CD8-positive, alpha-beta T cell (primary cell): ENCODE measurements at regions of chr9 and their contacts with region 1.

Region 1: DNA sequence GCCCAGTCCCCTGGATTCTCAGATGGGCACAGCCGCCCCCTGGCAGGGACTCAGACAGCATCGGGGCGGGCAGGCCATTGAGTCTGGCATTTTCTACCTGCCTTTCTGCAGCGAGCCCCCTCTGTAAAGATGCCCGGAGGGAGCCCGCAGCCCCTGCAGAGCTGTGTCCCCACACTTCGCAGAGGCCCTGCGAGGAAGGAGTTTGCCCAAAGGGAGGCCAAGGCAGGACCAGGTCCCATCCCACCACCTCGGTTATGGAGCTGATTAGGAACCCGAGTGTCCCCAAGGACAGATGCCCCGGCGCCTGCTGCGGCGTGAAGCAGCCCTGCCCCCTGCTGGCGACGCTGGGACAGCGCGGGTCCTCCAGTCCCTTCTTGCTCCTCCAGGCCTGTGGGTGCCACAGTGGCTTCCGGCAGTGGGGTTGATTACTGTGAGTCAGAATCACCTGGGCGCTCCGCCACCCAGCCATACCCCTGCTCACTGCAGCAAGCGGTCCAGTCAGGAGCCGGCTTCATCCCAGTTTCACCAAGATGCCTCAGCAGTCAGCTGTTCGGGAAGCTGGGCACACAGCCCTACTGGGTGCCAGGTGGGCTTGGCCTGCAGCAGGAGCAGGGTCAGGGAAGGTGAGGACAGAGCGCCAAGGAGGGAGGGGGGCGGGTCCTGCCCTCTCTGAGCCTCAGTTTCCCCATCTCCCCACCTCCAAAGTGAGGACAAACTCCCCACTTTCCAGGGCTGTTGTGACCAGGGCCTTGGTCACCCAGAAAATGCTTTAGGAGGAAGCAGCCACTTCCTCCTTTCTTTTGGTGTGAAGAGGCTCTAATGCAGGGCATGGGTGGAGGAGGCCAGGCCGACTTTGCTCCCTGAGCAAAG is 117.1 kb downstream of the RXRA start:
- DNase-seq: peak; percentile 70 to 94 (median 88)
- ATAC-seq: peak; percentile 99
- H3K4me3 ChIP-seq: no peak overlapping the region
- H3K4me3 Mint-ChIP-seq: no peak overlapping the region
- H3K27ac ChIP-seq: peak overlapping the region in 1 of 2 experiments; percentile 28
- H3K27ac Mint-ChIP-seq: peak overlapping the region; percentile 67
- H3K4me1 ChIP-seq: peaks cover 12% of the 10 kb centered on the region
- H3K4me1 Mint-ChIP-seq: peaks cover 12% of the 10 kb centered on the region
- H3K27me3 ChIP-seq: peaks cover 5 to 8% of the 10 kb centered on the region in 2 experiments
- H3K27me3 Mint-ChIP-seq: peaks cover 4% of the 10 kb centered on the region
- CTCF ChIP-seq: peak; percentile 91

Region 2: GRCh38 chr9:134171316-134172197 is 271.8 kb before region 1 on chr9:
- CTCF ChIA-PET with region 1: interaction called, 71 read pairs
- POLR2A ChIA-PET with region 1: interaction called, 5 read pairs
- intact Hi-C with region 1: loop called (anchors 1 kb)
- DNase-seq: peak in 1 of 9 experiments; percentile 16
- ATAC-seq: no peak
- H3K4me3 ChIP-seq: no peak overlapping the region
- H3K4me3 Mint-ChIP-seq: no peak overlapping the region
- H3K27ac ChIP-seq: no peak overlapping the region
- H3K27ac Mint-ChIP-seq: no peak overlapping the region
- H3K4me1 ChIP-seq: no peaks in the 10 kb centered on the region
- H3K4me1 Mint-ChIP-seq: no peaks in the 10 kb centered on the region
- H3K27me3 ChIP-seq: no peaks in the 10 kb centered on the region
- H3K27me3 Mint-ChIP-seq: no peaks in the 10 kb centered on the region
- CTCF ChIP-seq: no peak

Region 3: GRCh38 chr9:134325817-134326723 is 117.3 kb before region 1 on chr9 and contains the start of gene RXRA:
- CTCF ChIA-PET with region 1: interaction called, 7 read pairs
- POLR2A ChIA-PET with region 1: no interaction called
- intact Hi-C with region 1: loop called in 1 of 2 experiments (anchors 2 kb)
- DNase-seq: peak; percentile 37 to 87 (median 74)
- ATAC-seq: peak; percentile 69
- H3K4me3 ChIP-seq: peak within 1 kb of the TSS; percentile 68 to 93
- H3K4me3 Mint-ChIP-seq: peak within 1 kb of the TSS; percentile 75
- H3K27ac ChIP-seq: peak within 1 kb of the TSS in 1 of 2 experiments; percentile 33
- H3K27ac Mint-ChIP-seq: no peak within 1 kb of the TSS
- H3K4me1 ChIP-seq: peaks cover 16% of the 10 kb centered on the region
- H3K4me1 Mint-ChIP-seq: peaks cover 2% of the 10 kb centered on the region
- H3K27me3 ChIP-seq: no peaks in the 10 kb centered on the region
- H3K27me3 Mint-ChIP-seq: no peaks in the 10 kb centered on the region
- CTCF ChIP-seq: no peak
- total RNA-seq, gene RXRA: 11.6 to 13.7 TPM

Region 4: DNA sequence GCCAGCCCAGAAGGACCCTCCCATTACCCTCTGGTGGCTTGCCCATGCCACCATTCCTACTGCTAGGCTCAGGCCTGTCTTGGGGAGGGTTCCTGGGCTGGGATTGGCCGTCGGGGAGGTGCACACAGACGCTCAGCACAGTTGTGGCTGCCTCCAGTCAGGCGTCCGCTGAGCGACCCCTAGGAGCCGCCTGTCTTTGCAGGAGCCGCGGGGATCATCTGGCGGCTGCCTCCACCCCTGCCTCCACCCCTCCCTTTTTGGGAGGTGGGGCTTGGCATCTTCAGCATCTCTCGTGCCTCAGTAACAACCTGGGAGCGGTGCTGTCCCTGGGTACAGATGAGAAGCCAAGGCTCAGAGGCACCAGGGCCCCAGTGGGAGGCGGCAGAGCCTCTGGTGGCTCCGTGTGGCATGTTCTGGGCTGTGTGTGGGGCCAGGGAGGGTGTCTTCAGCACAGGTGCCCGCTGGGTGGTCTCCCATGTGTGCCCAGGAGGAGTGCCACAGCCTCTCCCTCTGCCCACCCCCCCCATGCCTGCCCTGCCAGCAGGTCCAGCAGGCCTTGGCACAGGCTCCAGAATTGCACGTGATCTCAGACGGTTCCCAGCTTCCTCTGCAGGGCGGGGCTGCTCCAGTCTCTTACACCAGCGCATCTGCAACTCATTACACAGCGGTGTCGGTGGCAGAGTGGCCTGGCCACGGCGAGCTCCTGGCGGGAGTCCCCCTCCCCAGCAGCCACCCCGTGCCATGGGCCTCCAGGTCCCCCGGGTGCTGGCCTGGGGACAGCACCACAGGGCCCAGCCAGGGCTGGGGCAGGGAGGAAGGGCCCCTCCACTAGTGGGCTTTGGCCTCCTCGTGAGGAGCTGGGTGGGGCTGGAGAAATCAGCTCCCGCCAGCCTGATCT is 77.4 kb before region 1 on chr9:
- CTCF ChIA-PET with region 1: interaction called, 20 read pairs
- POLR2A ChIA-PET with region 1: no interaction called
- intact Hi-C with region 1: loop called in 1 of 2 experiments (anchors 2 kb)
- DNase-seq: peak in 1 of 9 experiments; percentile 34
- ATAC-seq: no peak
- H3K4me3 ChIP-seq: no peak overlapping the region
- H3K4me3 Mint-ChIP-seq: no peak overlapping the region
- H3K27ac ChIP-seq: no peak overlapping the region
- H3K27ac Mint-ChIP-seq: no peak overlapping the region
- H3K4me1 ChIP-seq: no peaks in the 10 kb centered on the region
- H3K4me1 Mint-ChIP-seq: peaks cover 2% of the 10 kb centered on the region
- H3K27me3 ChIP-seq: no peaks in the 10 kb centered on the region
- H3K27me3 Mint-ChIP-seq: no peaks in the 10 kb centered on the region
- CTCF ChIP-seq: no peak

Region 5: GRCh38 chr9:134381671-134382516 is 61.5 kb before region 1 on chr9:
- CTCF ChIA-PET with region 1: interaction called, 12 read pairs
- POLR2A ChIA-PET with region 1: no interaction called
- intact Hi-C with region 1: loop called in 1 of 2 experiments (anchors 1 kb)
- DNase-seq: peak in 8 of 9 experiments; percentile 40 to 86 (median 64)
- ATAC-seq: peak; percentile 80
- H3K4me3 ChIP-seq: peak overlapping the region; percentile 18 to 28
- H3K4me3 Mint-ChIP-seq: peak overlapping the region; percentile 53
- H3K27ac ChIP-seq: peak overlapping the region in 1 of 2 experiments; percentile 19
- H3K27ac Mint-ChIP-seq: peak overlapping the region; percentile 77
- H3K4me1 ChIP-seq: peaks cover 29% of the 10 kb centered on the region
- H3K4me1 Mint-ChIP-seq: peaks cover 22% of the 10 kb centered on the region
- H3K27me3 ChIP-seq: no peaks in the 10 kb centered on the region
- H3K27me3 Mint-ChIP-seq: no peaks in the 10 kb centered on the region
- CTCF ChIP-seq: peak; percentile 48

Region 6: GRCh38 chr9:134492281-134492691 is 48.9 kb after region 1 on chr9:
- CTCF ChIA-PET with region 1: no interaction called
- POLR2A ChIA-PET with region 1: no interaction called
- intact Hi-C with region 1: no loop called
- DNase-seq: no peak
- ATAC-seq: no peak
- H3K4me3 ChIP-seq: no peak overlapping the region
- H3K4me3 Mint-ChIP-seq: no peak overlapping the region
- H3K27ac ChIP-seq: no peak overlapping the region
- H3K27ac Mint-ChIP-seq: no peak overlapping the region
- H3K4me1 ChIP-seq: no peaks in the 10 kb centered on the region
- H3K4me1 Mint-ChIP-seq: no peaks in the 10 kb centered on the region
- H3K27me3 ChIP-seq: no peaks in the 10 kb centered on the region
- H3K27me3 Mint-ChIP-seq: peaks cover 4% of the 10 kb centered on the region
- CTCF ChIP-seq: no peak

Region 7: DNA sequence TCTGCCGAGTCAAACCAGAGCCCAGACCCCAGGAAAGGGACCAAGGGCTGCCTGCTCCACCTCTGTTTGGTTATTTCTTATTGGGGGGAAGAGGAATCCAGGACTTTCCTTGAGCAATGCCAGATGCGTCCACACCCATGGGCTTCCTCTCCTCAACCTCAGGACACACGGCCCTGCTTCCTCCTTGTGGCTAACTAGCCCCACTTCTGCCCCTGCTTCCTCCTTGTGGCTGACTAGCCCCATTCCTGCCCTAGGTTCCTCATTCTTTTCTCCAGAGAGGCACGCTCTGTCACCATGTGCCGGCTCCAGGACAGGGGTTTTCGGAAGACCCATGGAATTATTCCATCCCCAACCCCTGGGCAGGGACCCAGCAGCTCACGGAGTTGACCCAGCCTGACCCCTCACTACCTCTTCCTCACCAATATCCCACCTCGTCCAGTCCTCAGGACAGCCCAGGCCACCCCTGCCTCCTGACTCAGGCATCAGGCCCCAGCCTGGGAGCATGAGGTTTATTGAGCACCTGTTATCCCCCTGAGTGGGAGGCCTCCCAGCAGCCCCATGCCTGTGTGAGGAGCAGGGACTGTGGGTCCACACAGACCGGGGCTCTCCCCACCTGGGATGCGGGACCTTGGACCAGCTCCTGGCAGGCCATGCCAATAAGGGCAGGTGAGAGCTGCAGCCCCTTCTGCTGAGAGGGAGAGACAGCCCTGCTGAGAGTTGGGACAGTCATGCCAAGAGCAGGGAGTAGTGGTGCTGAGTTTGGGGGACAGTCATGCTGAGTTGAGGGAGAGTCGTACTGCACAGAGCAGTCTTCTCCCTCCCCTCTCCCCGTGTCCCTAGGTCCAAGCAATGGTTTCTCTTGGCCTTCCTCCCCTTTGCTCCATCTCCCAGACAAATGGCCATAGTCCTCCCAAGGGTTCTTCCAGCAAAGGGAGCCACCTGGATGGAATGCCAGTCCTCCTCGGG is 486.1 kb after region 1 on chr9:
- CTCF ChIA-PET with region 1: no interaction called
- POLR2A ChIA-PET with region 1: no interaction called
- intact Hi-C with region 1: no loop called
- DNase-seq: peak in 1 of 9 experiments; percentile 33
- ATAC-seq: no peak
- H3K4me3 ChIP-seq: no peak overlapping the region
- H3K4me3 Mint-ChIP-seq: no peak overlapping the region
- H3K27ac ChIP-seq: no peak overlapping the region
- H3K27ac Mint-ChIP-seq: no peak overlapping the region
- H3K4me1 ChIP-seq: no peaks in the 10 kb centered on the region
- H3K4me1 Mint-ChIP-seq: no peaks in the 10 kb centered on the region
- H3K27me3 ChIP-seq: no peaks in the 10 kb centered on the region
- H3K27me3 Mint-ChIP-seq: peaks cover 22% of the 10 kb centered on the region
- CTCF ChIP-seq: no peak